ENCODE measurements at regions of chr2 and their contacts with region 1.

Region 1: GRCh38 chr2:27185331-27186026 is 26.4 kb upstream of the ATRAID start:
- DNase-seq: peak in 5 of 10 donors; percentile 19 to 63 (median 59)
- H3K4me3 ChIP-seq: no peak overlapping the region
- H3K27ac ChIP-seq: peak overlapping the region in 14 of 59 donors; percentile 0 to 62 (median 27)
- H3K27me3 ChIP-seq: peaks cover 0 to 3% (median 0%) of the 10 kb centered on the region in 45 donors
- CTCF ChIP-seq: no peak

Region 2: DNA sequence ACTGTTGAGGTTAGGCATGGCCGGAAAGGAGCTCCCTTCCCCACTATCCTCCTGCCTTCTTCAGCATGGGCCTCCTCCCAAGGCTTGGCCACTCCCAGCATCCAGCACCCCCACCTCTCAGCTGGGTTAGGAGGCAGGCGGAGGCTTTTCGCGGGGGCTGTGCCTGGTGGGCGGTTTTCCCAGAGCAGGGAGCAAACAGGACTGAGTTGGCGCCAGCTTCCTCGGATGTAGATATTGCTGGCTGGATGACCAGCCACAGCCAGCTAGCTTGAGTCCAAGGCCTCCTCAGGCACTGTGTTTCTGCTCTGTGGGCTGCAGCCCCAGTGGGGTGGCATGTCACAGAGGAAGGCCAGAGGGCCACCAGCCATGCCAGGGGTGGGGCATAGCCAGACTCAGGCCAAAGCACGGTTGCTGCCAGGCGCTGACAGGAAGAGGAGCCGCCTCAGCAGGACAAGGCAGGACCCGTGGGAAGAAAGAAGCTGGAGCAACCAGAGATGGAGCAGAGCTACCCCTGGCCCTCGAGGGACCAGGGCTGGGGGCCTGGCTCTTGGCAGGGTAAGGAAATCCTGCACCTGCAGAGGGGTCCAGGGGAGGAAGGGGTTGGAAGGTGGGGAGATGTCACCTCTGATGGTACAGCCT is 36.6 kb before region 1 on chr2 and contains the start of gene TCF23:
- intact Hi-C with region 1: loop called in 1 of 2 experiments (anchors 5 kb)
- DNase-seq: no peak
- H3K4me3 ChIP-seq: no peak within 1 kb of the TSS
- H3K27ac ChIP-seq: no peak within 1 kb of the TSS
- H3K27me3 ChIP-seq: no peaks in the 10 kb centered on the region
- CTCF ChIP-seq: no peak
- total RNA-seq, gene TCF23: 0.07 to 0.40 (median 0.11) TPM in 22 of 120 experiments, not detected in the others

Region 3: DNA sequence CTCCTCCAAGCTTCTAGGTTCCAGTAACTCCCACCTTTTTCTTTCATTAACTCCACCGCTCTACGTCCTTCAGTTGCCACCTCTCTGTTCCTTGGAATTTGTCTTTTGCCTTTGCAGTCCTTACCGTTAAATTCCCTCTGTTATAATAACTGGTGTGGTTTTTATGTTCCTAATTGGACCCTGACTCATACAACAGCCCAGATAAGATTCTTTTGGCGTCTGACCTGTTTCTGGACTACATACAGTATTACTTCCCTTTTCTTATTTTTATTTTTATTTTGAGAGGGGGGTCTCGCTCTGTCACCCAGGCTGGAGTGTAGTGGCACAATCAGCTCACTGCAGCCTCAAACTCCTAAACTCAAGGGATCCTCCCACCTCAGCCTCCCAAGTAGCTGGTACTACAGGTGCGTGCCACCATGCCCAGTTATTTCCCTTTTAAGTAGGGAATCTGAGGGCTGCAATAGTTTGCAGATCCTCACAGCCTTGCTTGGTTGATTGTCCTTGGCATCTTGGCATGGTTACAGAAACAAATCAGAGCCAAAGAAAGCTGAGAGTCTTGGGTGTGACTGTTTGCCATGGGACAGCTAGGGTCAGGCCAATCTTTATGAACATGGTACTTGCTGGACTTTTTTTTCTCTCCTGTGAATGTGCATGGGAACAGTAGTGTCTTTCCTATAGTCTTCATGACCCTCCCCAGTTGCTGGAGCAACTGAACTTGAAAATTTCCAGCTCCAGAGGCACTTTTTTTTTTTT is 14.7 kb before region 1 on chr2:
- intact Hi-C with region 1: loop called in 1 of 2 experiments (anchors 1 kb)
- DNase-seq: no peak
- H3K4me3 ChIP-seq: peak overlapping the region in 1 of 59 donors; percentile 34
- H3K27ac ChIP-seq: no peak overlapping the region
- H3K27me3 ChIP-seq: no peaks in the 10 kb centered on the region
- CTCF ChIP-seq: no peak

Measured in dorsolateral prefrontal cortex (tissue), 120 donors.